ENCODE measurements at regions of chr7 and their contacts with region 1.

Region 1: DNA sequence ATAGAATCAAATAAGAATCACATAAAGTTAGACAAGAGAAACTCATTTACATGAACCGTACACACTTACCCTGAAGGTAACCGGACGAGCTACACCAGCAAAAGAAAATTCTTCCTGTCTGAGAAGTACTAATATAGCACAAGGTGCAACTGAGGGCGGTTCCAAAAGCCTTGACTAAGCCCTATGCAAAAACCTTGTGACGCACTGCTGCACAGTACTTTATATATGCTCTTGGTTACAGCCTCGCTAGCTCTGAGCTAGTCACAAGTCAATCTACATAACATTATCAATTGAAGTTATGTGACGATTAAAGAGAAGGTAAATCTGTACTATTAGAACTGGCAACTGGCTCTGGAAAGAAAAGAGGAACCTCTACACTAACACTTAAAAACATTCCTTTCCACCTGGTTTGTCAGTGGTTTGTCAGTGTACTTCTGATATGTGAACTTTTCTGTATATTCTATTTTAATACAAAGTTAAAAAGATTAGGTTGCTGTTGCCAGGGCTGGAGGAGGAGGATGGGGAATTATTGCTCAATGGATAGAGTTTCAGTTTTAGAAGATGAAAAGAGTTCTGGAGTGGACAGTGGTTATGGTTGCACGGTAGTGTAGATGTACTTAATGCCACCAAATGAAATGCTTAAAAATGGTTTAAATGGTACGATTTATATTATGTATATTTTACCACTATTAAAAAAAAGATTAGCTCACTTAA is 21.6 kb downstream of the NT5C3A start:
- DNase-seq: no peak
- H3K4me3 ChIP-seq: peak overlapping the region in 1 of 2 donors; percentile 34
- H3K27ac ChIP-seq: peak overlapping the region; percentile 77
- H3K4me1 ChIP-seq: peaks cover 49% of the 10 kb centered on the region
- H3K27me3 ChIP-seq: no peaks in the 10 kb centered on the region
- CTCF ChIP-seq: no peak
- POLR2A ChIP-seq: no peak

Region 2: GRCh38 chr7:32323712-32324111 is 717.2 kb before region 1 on chr7:
- intact Hi-C with region 1: loop called (anchors 5 kb)
- DNase-seq: peak in 1 of 2 donors; percentile 62
- H3K4me3 ChIP-seq: no peak overlapping the region
- H3K27ac ChIP-seq: no peak overlapping the region
- H3K4me1 ChIP-seq: no peaks in the 10 kb centered on the region
- H3K27me3 ChIP-seq: no peaks in the 10 kb centered on the region
- CTCF ChIP-seq: no peak
- POLR2A ChIP-seq: no peak

Measured in vagina (tissue), 2 donors.